ENCODE measurements at regions of chr4 and their contacts with region 1.

Region 1: GRCh38 chr4:15043226-15043625 is 40.9 kb downstream of the CPEB2 start:
- DNase-seq: peak; percentile 24
- ATAC-seq: peak; percentile 69; the same call in 2 of the 3 replicates
- H3K4me3 ChIP-seq: no peak overlapping the region
- H3K27ac ChIP-seq: no peak overlapping the region
- H3K4me1 ChIP-seq: no peaks in the 10 kb centered on the region
- H3K27me3 ChIP-seq: no peaks in the 10 kb centered on the region
- CTCF ChIP-seq: peak; percentile 52
- EP300 ChIP-seq: no peak
- POLR2A ChIP-seq: no peak
- RAD21 ChIP-seq: no peak

Region 2: DNA sequence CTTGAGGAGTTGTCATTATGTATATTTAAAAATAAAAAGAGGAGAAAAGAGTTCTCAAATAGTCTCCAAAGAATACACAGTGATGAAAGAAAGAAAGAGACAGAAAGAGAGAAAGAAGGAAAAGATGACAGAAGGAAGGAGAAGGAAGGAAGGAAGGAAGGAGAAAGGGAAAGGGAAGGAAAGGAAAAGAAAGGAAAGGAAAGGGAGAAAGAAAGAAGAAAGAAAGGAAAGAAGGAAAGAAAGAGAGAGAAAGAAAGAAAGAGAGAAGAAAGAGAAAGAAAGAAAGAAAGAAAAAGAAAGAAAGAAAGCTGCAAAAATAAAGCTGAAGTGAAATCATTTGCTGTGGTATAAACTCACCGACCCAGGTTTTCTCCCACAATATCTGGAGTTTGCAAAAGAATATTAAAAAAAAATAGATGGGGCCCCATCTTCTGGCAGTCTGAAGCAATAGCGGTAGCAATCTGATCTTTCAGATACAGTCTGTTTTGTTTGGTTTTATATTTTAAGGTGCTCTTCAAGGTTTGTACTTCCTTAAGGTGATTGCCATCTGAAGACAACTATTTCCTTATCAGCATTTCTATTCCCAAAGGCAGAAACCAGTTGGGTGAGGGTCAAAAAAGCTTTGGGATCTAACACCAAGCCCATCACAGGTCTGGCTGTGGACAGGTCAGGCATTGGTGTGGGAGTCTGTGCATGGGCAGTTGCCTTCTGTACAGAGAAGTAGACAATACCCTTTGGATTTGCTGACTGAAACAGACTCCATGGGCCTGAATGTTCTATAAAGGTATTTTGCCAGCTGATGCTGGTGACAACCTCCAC is 119.4 kb after region 1 on chr4:
- CTCF ChIA-PET with region 1: interaction called, 4 read pairs
- POLR2A ChIA-PET with region 1: no interaction called
- in situ Hi-C with region 1: no loop called
- intact Hi-C with region 1: loop called (anchors 1 kb)
- DNase-seq: peak; percentile 15
- ATAC-seq: peak; percentile 54; the same call in 2 of the 3 replicates
- H3K4me3 ChIP-seq: no peak overlapping the region
- H3K27ac ChIP-seq: no peak overlapping the region
- H3K4me1 ChIP-seq: peaks cover 17% of the 10 kb centered on the region
- H3K27me3 ChIP-seq: no peaks in the 10 kb centered on the region
- CTCF ChIP-seq: peak; percentile 17; the same call in 1 of the 2 replicates
- EP300 ChIP-seq: no peak
- POLR2A ChIP-seq: no peak
- RAD21 ChIP-seq: no peak

Region 3: GRCh38 chr4:15197005-15197404 is 153.8 kb after region 1 on chr4:
- CTCF ChIA-PET with region 1: no interaction called
- POLR2A ChIA-PET with region 1: no interaction called
- in situ Hi-C with region 1: no loop called
- intact Hi-C with region 1: loop called (anchors 1 kb)
- DNase-seq: peak; percentile 23
- ATAC-seq: peak; percentile 82
- H3K4me3 ChIP-seq: no peak overlapping the region
- H3K27ac ChIP-seq: no peak overlapping the region
- H3K4me1 ChIP-seq: no peaks in the 10 kb centered on the region
- H3K27me3 ChIP-seq: no peaks in the 10 kb centered on the region
- CTCF ChIP-seq: peak; percentile 54
- EP300 ChIP-seq: no peak
- POLR2A ChIP-seq: no peak
- RAD21 ChIP-seq: no peak